ENCODE measurements at regions of chr15 and their contacts with region 1.

Region 1: DNA sequence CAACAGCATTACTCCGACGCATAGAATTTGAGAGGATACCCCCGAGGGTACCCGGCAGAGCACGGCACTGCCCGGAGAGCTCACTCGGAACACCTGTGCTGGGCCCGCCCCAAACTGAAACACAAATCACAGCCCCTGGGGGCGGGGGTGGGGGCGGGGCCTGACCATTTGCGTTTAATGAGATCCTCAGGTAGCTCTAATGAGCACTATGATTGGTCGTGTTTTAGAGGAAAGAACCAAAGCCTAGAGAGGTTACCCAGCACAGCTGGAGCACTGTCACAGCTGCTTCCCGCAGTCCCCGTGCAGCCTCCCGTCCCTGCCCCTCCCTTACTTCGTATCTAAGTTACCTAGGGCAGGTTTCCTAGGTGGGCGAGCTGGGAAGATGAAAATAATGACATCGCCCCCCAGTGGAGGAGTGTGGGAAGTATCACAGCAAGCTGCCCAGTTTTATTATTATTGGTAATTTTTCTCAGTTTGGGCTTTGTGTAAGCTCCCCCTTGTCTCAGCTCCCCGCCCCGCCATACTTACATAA is 187.1 kb downstream of the PDE8A start:
- DNase-seq: peak; percentile 67 to 75
- H3K4me3 ChIP-seq: peak overlapping the region; percentile 60
- H3K27ac ChIP-seq: no peak overlapping the region
- H3K4me1 ChIP-seq: peaks cover 18% of the 10 kb centered on the region
- H3K27me3 ChIP-seq: no peaks in the 10 kb centered on the region
- CTCF ChIP-seq: peak; percentile 81

Region 2: GRCh38 chr15:84734794-84735479 is 433.8 kb before region 1 on chr15:
- CTCF ChIA-PET with region 1: interaction called, 10 read pairs
- POLR2A ChIA-PET with region 1: no interaction called
- intact Hi-C with region 1: no loop called
- DNase-seq: peak; percentile 84 to 94
- H3K4me3 ChIP-seq: peak overlapping the region; percentile 41; the same call in 1 of the 2 replicates
- H3K27ac ChIP-seq: peak overlapping the region; percentile 95
- H3K4me1 ChIP-seq: peaks cover 45% of the 10 kb centered on the region
- H3K27me3 ChIP-seq: no peaks in the 10 kb centered on the region
- CTCF ChIP-seq: no peak

Region 3: DNA sequence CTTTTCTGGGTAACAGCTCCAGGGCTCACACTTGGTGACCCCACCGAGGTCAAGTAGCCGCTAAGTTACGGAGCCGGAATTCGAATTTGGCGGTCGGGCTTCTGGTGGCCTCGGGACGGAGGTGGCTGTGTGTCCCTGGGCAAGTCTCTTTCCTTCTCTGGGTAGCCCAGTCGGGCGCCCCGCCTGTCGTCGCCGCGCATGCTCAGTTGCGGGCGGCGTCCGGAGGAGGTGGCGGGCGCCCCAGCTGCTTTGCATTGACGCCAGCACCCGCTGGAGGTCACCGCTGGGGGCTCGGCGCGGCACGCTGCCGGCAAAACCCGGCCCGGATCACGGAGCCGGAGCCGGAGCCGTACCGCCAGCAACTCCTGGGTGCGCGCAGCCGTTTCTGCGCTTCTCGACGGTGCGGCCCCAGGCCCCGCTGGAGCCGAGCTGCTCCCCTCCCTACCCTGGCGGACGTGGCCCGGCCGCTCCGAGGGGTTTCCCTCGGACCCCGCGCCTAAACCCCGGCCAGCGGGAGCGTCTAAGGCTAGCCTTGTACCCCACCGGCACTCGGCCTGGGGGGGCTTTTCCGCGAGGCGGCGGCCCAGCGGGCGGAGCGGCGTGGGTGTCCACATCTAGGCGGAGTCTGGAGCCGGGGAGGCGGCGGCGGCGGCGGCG is 187.5 kb before region 1 on chr15:
- CTCF ChIA-PET with region 1: no interaction called
- POLR2A ChIA-PET with region 1: no interaction called
- intact Hi-C with region 1: no loop called
- DNase-seq: peak; percentile 87 to 97
- H3K4me3 ChIP-seq: peak overlapping the region; percentile 69
- H3K27ac ChIP-seq: peak overlapping the region; percentile 63
- H3K4me1 ChIP-seq: peaks cover 29% of the 10 kb centered on the region
- H3K27me3 ChIP-seq: no peaks in the 10 kb centered on the region
- CTCF ChIP-seq: no peak; the same call in 1 of the 2 replicates

Region 4: GRCh38 chr15:85142312-85142711 is 26.4 kb before region 1 on chr15:
- CTCF ChIA-PET with region 1: interaction called, 3 read pairs
- POLR2A ChIA-PET with region 1: interaction called, 11 read pairs
- intact Hi-C with region 1: no loop called
- DNase-seq: peak; percentile 41 to 65
- H3K4me3 ChIP-seq: no peak overlapping the region
- H3K27ac ChIP-seq: peak overlapping the region; percentile 21; the same call in 1 of the 2 replicates
- H3K4me1 ChIP-seq: peaks cover 15% of the 10 kb centered on the region
- H3K27me3 ChIP-seq: no peaks in the 10 kb centered on the region
- CTCF ChIP-seq: no peak

Measured in PC-9 (cell line).